PC-3 (cell line): ENCODE measurements at regions of chr17 and their contacts with region 1.

Region 1: GRCh38 chr17:74203439-74204240 is at the start of gene RPL38:
- DNase-seq: peak; percentile 99
- ATAC-seq: peak; percentile 58
- H3K4me3 ChIP-seq: peak within 1 kb of the TSS; percentile 96
- H3K27ac ChIP-seq: peak within 1 kb of the TSS; percentile 42
- H3K4me1 ChIP-seq: peaks cover 29% of the 10 kb centered on the region
- H3K27me3 ChIP-seq: peaks cover 33% of the 10 kb centered on the region
- CTCF ChIP-seq: peak; percentile 96
- total RNA-seq, gene RPL38: 2,878 and 3,689 TPM in 2 replicates

Region 2: DNA sequence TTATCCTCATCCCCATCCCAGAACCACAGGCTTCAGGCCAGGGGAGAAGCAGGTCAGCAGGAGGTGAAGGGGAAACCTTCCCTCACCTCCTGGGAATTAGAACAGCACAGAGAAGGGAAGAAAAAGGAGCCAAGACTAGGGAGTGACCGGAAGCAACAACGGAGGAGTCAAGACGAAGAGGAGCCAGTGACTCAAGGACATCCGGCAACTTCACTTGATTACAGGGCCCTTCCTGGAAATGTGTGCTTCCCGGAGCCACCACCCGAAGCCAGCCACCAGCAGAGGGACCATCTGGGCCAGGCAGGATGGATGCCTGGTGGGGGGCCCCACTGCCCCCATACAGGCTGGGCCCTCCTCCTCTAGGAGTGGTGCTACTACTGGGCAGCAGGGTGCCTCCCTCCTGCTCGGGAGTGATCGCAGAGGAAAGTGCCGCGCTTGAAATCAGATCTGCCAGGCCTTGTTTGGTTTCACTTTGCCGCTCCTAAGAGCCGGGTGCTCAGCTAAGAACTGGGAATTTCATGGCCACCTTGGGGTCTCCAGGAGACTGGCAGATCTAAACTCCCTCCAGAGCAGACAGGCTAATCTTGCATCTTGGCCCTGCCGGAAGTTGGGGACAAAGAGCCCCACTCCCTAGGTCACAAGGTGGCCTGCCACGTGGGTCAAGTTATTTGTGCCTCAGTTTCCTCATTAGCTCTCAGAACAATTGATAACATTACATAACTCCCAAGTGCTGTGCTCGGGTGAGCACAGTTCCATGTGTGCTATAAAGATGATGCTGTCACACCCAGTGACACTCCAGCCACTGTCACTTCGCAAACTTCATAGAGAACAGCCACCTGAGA is 898.4 kb before region 1 on chr17:
- CTCF ChIA-PET with region 1: no interaction called
- POLR2A ChIA-PET with region 1: no interaction called
- intact Hi-C with region 1: loop called (anchors 10 kb)
- DNase-seq: peak; percentile 84
- ATAC-seq: peak; percentile 64
- H3K4me3 ChIP-seq: peak overlapping the region; percentile 55
- H3K27ac ChIP-seq: peak overlapping the region; percentile 82
- H3K4me1 ChIP-seq: peaks cover 67% of the 10 kb centered on the region
- H3K27me3 ChIP-seq: no peaks in the 10 kb centered on the region
- CTCF ChIP-seq: peak; percentile 60

Region 3: GRCh38 chr17:73924501-73925186 is 279.0 kb before region 1 on chr17:
- CTCF ChIA-PET with region 1: no interaction called
- POLR2A ChIA-PET with region 1: no interaction called
- intact Hi-C with region 1: no loop called
- DNase-seq: no peak
- ATAC-seq: no peak
- H3K4me3 ChIP-seq: no peak overlapping the region
- H3K27ac ChIP-seq: no peak overlapping the region
- H3K4me1 ChIP-seq: no peaks in the 10 kb centered on the region
- H3K27me3 ChIP-seq: peaks cover 32% of the 10 kb centered on the region
- CTCF ChIP-seq: no peak

Region 4: GRCh38 chr17:74089869-74090464 is 113.7 kb before region 1 on chr17:
- CTCF ChIA-PET with region 1: interaction called, 10 read pairs
- POLR2A ChIA-PET with region 1: no interaction called
- intact Hi-C with region 1: loop called (anchors 5 kb)
- DNase-seq: peak; percentile 77
- ATAC-seq: peak; percentile 42; the same call in 1 of the 2 replicates
- H3K4me3 ChIP-seq: no peak overlapping the region
- H3K27ac ChIP-seq: no peak overlapping the region
- H3K4me1 ChIP-seq: no peaks in the 10 kb centered on the region
- H3K27me3 ChIP-seq: peaks cover 45% of the 10 kb centered on the region
- CTCF ChIP-seq: peak; percentile 89

Region 5: DNA sequence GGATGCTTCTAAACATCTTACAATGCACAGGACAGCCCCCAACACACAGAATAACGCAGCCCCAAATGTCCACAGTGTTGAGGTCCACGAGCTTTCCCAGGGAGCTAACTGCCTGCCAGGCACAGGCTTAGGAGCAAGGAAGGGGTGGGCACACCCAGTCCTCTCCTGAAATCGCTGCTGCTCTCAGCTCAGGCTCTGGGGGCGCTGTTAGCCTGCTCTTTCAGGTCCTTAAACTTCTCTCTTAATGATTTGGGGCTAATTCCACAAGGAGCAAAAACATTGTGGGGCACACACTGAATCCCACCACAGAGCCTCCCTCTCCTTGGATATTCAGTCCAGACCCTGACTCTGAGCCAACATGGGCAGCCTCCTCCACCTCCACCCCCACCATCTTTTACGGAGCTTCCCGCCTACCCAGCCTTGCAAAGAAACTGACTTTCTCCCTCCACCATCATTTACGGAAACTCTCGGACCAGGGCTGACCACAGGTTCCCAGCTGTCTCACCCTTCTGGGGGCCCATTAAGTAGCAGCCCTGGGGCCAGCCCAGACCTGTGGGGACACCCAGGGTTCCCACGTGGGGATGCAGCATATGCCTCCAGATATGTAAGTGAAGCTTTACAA is 362.6 kb after region 1 on chr17:
- CTCF ChIA-PET with region 1: interaction called, 14 read pairs
- POLR2A ChIA-PET with region 1: no interaction called
- intact Hi-C with region 1: no loop called
- DNase-seq: peak; percentile 64
- ATAC-seq: peak; percentile 15; the same call in 1 of the 2 replicates
- H3K4me3 ChIP-seq: no peak overlapping the region
- H3K27ac ChIP-seq: no peak overlapping the region
- H3K4me1 ChIP-seq: peaks cover 14% of the 10 kb centered on the region
- H3K27me3 ChIP-seq: peaks cover 34% of the 10 kb centered on the region
- CTCF ChIP-seq: peak; percentile 90